ENCODE measurements at regions of chrX and their contacts with region 1.

Region 1: DNA sequence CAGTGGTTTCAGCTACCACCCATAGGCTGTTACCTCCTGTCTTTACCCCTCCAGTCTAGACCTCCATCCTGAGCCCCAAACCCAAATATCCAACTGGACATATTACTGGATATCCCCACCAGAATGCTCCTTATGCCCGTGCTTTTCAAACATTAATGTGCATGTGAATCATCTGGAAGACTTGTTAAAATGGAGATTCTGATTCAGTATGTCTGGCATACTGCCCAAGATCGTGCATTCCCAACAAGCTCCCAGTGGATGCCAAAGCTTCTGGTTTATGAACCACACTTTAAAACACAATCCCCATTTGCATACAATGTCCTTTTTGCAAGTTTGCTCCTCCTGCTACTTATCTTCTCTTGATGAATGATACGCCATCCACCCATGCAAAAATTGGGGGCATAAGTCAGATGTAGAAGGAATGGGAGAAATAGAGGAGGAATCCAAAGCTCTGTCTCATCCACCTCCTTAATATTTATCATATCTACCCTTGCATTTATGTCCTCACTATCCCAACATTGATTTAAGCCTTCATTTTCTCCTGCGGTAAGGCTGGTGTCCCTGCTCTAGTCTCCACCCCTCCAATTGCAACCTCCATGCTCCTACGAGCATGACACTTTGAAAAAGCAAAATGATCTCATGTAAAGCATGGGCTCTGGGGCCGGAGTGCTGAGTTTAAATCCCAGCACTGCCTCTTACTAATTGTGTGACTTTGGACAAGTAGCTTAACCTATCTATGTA is 7.4 kb upstream of the PGRMC1 start:
- DNase-seq: peak; percentile 78
- H3K4me3 Mint-ChIP-seq: no peak overlapping the region
- H3K27ac Mint-ChIP-seq: no peak overlapping the region
- H3K4me1 Mint-ChIP-seq: peaks cover 10% of the 10 kb centered on the region
- H3K27me3 Mint-ChIP-seq: peaks cover 69% of the 10 kb centered on the region
- CTCF ChIP-seq: no peak

Region 2: GRCh38 chrX:119211649-119212014 is 17.1 kb before region 1 on chrX:
- CTCF ChIA-PET with region 1: interaction called, 10 read pairs
- POLR2A ChIA-PET with region 1: no interaction called
- intact Hi-C with region 1: no loop called
- DNase-seq: no peak
- H3K4me3 Mint-ChIP-seq: no peak overlapping the region
- H3K27ac Mint-ChIP-seq: no peak overlapping the region
- H3K4me1 Mint-ChIP-seq: no peaks in the 10 kb centered on the region
- H3K27me3 Mint-ChIP-seq: peaks cover 55% of the 10 kb centered on the region
- CTCF ChIP-seq: no peak